Heart left ventricle (tissue), 16 donors: ENCODE measurements at regions of chr6 and their contacts with region 1.

Region 1: GRCh38 chr6:9233686-9234085 is 798.3 kb upstream of the SLC35B3 start:
- DNase-seq: no peak
- ATAC-seq: no peak
- H3K4me3 ChIP-seq: no peak overlapping the region
- H3K27ac ChIP-seq: no peak overlapping the region
- H3K4me1 ChIP-seq: no peaks in the 10 kb centered on the region
- H3K27me3 ChIP-seq: no peaks in the 10 kb centered on the region
- CTCF ChIP-seq: no peak
- POLR2A ChIP-seq: no peak

Region 2: DNA sequence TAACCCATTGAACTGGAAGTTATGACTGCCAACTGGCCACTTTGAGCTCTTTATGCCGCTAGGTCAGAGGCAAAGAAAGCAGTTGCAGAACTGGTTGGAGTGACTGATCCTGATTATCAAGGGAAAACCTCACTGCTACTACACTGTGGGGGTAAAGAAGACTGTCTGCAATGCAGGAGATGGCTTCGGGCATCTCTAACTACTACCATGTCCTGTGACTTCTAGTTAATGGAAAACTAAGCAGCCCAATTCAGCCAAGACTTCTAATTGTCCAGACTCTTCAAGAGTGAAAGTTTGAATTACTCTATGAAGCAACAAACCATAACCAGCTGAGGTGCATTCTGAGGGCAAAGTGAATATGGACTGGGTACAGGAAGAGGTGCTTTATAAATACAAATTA is 24.7 kb before region 1 on chr6:
- intact Hi-C with region 1: loop called in 1 of 10 experiments (anchors 2 kb)
- DNase-seq: no peak
- ATAC-seq: no peak
- H3K4me3 ChIP-seq: no peak overlapping the region
- H3K27ac ChIP-seq: no peak overlapping the region
- H3K4me1 ChIP-seq: no peaks in the 10 kb centered on the region
- H3K27me3 ChIP-seq: no peaks in the 10 kb centered on the region
- CTCF ChIP-seq: no peak
- POLR2A ChIP-seq: no peak